ENCODE measurements at regions of chr15 and their contacts with region 1.

Region 1: DNA sequence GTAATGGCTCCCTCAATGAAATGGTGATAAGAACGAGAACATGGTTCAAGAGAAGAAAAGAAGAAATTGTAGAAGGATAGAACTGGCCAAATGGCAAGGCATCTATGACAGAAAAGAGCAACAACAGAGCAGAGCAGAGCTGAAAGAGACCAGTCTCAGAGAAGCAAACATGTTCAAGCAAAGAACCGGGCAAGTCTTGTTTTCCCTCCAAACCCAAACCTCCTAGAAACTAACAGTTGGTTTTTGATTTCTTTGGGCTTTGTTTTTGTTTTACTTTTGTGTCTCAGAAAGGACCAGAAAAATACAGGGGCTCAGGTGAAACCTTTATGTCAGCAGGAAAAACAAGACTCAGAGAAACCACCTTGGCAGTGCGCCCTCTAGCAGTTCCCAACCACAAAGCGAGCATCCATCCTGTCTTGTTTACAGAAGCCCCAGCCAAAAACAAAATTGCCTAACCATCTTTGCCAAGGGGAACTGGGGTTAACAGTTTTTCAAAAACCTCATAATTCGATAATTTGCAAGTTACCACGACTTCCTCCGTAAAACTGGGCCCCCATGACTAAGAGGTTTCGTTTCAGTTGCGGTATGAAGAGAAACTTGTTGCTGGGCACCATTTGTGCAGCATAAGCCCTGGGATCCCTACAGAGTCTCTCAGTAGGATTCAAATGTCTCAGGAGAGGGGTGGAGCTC is 159.2 kb upstream of the SLC24A5 start:
- DNase-seq: no peak
- ATAC-seq: peak; percentile 40
- H3K4me3 Mint-ChIP-seq: no peak overlapping the region
- H3K27ac Mint-ChIP-seq: no peak overlapping the region
- H3K4me1 Mint-ChIP-seq: peaks cover 10% of the 10 kb centered on the region
- H3K27me3 Mint-ChIP-seq: peaks cover 11% of the 10 kb centered on the region
- CTCF ChIP-seq: no peak

Region 2: GRCh38 chr15:47812436-47813109 is 149.0 kb before region 1 on chr15:
- CTCF ChIA-PET with region 1: no interaction called
- POLR2A ChIA-PET with region 1: no interaction called
- intact Hi-C with region 1: loop called (anchors 5 kb)
- DNase-seq: no peak
- ATAC-seq: no peak
- H3K4me3 Mint-ChIP-seq: no peak overlapping the region
- H3K27ac Mint-ChIP-seq: no peak overlapping the region
- H3K4me1 Mint-ChIP-seq: peaks cover 24% of the 10 kb centered on the region
- H3K27me3 Mint-ChIP-seq: no peaks in the 10 kb centered on the region
- CTCF ChIP-seq: no peak

Region 3: DNA sequence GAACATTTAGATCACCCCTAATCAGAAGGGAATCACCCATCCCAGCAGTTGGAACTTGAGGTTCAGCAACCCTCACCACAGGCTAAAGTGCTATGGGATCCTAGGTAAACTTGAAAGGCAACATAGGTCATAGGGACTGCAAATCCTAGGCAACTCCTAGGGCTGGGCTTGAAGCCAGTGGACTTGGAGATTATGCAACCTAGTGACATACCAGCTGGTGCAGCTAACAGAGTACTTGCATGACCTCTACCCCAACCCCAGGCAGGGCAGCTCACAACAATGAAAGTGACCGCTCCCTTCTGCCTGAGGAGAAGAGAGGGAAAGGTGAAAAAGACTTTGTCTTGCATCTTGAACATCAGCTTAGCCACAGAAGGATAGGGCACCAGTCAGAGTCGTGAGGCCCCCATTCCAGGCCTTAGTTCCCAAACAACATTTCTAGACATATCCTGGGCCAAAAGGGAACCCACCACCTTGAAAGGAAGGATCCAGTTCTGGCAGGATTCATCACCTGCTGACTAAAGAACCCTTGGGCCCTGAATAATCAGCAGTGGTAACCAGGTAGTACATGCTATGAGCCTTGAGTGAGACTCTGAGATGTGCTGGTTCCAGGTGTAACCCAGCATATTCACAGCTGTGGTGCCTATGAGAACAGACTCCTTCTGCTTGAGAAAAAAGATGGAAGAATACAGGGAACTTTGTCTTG is 721.6 kb after region 1 on chr15:
- CTCF ChIA-PET with region 1: no interaction called
- POLR2A ChIA-PET with region 1: no interaction called
- intact Hi-C with region 1: no loop called
- DNase-seq: no peak
- ATAC-seq: no peak
- H3K4me3 Mint-ChIP-seq: no peak overlapping the region
- H3K27ac Mint-ChIP-seq: no peak overlapping the region
- H3K4me1 Mint-ChIP-seq: no peaks in the 10 kb centered on the region
- H3K27me3 Mint-ChIP-seq: no peaks in the 10 kb centered on the region
- CTCF ChIP-seq: no peak

Measured in activated B cell treated with CpG ODN at 0.5 μM for 24 hours (primary cell).